Activated CD4-positive, alpha-beta T cell treated with anti-CD3 and anti-CD28 coated beads, Interleukin-2, amount 10 ng/mL, durations not matched to agents 24 days and 14 days (primary cell): ENCODE measurements at regions of chr9 and their contacts with region 1.

Region 1: DNA sequence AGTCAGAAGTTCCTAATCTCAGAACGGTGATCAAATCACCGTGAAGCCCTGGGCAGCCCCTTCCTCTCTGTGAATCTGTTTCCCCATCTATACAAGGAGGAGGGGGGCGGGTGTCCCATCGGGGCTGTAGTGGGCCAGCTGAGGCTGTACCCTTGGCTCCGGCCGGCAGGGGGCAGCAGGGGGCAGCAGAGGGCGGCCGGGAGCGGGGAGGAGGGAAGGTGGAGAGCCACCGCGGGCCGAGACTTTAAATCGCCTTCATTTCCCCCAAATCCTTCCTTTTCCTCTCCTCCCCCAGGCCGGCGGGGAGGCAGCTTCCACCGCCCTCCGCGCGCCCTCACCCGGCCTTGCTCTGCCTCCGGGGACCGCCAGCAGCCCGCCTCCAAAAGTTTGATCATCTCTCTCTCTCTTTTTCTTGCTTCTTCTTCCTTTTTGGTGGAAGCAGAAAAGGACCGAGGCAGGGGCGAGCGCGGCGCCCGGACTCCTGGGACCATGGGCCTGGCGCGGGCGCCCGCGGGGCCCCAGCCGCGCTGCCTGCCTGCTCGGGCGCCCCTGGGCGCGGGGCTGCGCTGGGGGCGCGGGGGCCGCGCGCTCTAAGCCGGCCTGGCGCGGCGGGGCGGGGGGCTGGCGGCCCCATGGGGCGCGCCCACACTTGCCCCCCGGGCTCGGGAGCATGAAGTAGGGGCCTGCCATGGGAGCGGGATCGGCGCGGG is at the start of gene COL27A1:
- DNase-seq: peak; percentile 95
- H3K4me3 Mint-ChIP-seq: peak within 1 kb of the TSS; percentile 98
- H3K27ac Mint-ChIP-seq: peak within 1 kb of the TSS; percentile 92
- H3K4me1 Mint-ChIP-seq: peaks cover 16% of the 10 kb centered on the region
- H3K27me3 Mint-ChIP-seq: peaks cover 43% of the 10 kb centered on the region
- total RNA-seq, gene COL27A1: 8.5 and 9.7 TPM in 2 replicates

Region 2: DNA sequence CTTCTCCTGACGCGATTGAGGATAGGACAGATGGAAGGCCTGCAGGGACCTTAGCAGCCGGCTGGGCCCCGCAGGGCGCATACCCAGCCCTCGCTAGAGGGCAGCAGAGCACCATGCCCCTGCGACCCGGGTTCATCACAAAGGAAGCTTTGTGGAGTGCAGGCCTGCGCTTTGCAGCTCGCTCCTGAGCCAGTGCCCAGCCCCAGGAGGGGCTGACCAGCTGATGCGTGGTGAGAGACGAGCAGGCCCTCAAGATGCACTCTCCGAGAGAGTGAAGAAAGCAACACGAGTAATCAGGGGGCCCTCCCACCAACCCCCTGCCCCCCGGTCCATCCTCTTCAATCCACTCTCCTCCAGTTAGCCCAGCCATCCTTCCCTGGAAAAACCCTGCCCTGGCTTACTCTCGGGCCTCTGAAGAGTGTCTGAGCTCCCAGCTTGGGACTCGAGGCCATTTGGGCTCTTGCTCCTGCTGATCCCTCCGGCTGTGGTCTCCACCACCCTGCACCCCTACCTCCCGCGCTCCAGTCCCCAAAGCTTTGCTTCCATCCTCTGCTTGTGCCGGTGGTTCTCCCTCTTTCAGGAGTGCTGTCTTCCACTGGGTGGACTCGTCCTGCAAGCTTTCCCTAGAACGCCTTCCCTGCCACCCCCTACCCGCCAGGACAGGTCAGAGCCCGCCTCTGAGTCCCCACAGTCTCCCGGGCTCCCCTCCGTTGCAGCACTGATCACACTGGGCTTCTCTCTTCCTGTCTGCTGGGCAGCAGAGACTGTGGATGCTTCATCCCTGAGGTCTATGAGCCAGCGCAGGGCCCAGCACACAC is 47.2 kb before region 1 on chr9:
- intact Hi-C with region 1: loop called (anchors 5 kb)
- DNase-seq: peak; percentile 88
- H3K4me3 Mint-ChIP-seq: no peak overlapping the region
- H3K27ac Mint-ChIP-seq: no peak overlapping the region
- H3K4me1 Mint-ChIP-seq: no peaks in the 10 kb centered on the region
- H3K27me3 Mint-ChIP-seq: peaks cover 35% of the 10 kb centered on the region

Region 3: DNA sequence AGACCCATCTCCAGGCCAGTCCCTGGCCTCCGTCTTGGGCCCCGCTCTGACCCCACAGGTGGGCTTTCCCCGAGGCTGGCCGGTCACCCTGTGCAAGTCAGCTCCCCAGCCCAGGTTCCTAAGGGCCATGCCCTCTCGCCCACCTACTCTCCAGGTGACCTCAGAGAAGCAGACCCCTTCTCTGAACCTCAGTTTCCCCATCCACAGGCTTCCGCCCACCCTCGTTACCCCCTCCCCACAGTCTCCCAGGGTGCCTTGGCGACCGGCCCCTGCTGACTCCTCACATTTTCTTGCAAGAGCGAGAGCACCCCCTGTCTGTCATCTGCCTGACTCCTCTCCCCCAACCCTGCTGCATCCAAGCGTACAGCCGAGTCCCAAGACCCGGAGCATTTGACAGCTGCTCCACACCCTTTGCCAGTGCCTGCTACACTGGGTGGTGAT is 116.2 kb after region 1 on chr9:
- intact Hi-C with region 1: loop called (anchors 1 kb)
- DNase-seq: peak; percentile 76
- H3K4me3 Mint-ChIP-seq: no peak overlapping the region
- H3K27ac Mint-ChIP-seq: no peak overlapping the region
- H3K4me1 Mint-ChIP-seq: no peaks in the 10 kb centered on the region
- H3K27me3 Mint-ChIP-seq: no peaks in the 10 kb centered on the region